Mammary epithelial cell (primary cell): ENCODE measurements at regions of chr16 and their contacts with region 1.

Region 1: DNA sequence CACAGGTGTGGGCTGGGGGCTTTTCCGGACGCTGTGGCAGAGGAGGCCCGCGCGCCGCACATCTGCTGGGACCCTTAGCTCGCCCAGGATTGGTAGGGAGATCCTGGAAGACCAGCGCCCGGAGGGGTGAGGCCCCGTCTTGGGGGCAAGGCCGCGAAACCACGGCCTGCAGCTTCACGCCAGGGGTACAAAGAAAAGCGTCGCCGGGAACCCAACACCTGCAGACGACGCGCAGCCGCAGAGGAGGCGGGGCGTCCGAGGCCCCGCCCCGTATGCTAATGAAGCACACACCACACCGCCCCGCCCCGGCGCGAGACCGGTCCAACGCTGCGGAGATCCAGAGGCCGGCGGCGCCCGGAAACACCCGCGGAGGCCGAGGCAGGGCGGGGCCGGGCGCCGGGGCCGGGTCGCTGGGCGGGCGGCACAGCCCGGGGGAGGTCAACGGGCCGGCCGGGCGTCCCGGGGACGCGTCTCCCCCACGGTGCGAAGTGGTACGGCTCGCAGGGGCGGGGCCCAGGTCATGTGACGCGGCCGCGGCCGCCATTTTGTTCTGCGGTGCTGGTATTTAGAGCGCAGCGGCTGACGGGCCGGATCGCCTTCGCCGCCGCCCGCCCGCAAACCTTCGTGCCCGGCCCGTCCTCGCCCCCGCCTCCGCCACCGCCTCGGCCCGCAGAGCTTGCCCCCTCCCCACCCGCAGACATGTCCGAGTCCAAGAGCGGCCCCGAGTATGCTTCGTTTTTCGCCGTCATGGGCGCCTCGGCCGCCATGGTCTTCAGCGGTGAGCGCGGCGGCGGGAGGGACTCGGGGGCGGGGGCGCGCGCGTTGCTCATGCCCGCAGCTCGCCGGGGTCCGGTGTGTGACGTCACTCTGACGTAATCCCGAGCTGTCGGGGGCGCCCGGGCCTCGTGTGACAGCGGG is at the start of gene ATP6V0C:
- DNase-seq: peak; percentile 89
- H3K4me3 ChIP-seq: peak within 1 kb of the TSS; percentile 70 to 91 (median 71)
- H3K27ac ChIP-seq: peak within 1 kb of the TSS; percentile 67
- H3K4me1 ChIP-seq: peaks cover 37% of the 10 kb centered on the region
- H3K27me3 ChIP-seq: no peaks in the 10 kb centered on the region
- CTCF ChIP-seq: no peak
- total RNA-seq, gene ATP6V0C: 41.5 to 250 TPM

Region 2: GRCh38 chr16:2531767-2532493 is 18.3 kb after region 1 on chr16:
- CTCF ChIA-PET with region 1: no interaction called
- dilution Hi-C with region 1: no loop called
- in situ Hi-C with region 1: no loop called
- intact Hi-C with region 1: loop called (anchors 2 kb)
- DNase-seq: peak; percentile 98
- H3K4me3 ChIP-seq: peak overlapping the region; percentile 46 to 73 (median 65)
- H3K27ac ChIP-seq: peak overlapping the region; percentile 43
- H3K4me1 ChIP-seq: peaks cover 21% of the 10 kb centered on the region
- H3K27me3 ChIP-seq: no peaks in the 10 kb centered on the region
- CTCF ChIP-seq: no peak

Region 3: DNA sequence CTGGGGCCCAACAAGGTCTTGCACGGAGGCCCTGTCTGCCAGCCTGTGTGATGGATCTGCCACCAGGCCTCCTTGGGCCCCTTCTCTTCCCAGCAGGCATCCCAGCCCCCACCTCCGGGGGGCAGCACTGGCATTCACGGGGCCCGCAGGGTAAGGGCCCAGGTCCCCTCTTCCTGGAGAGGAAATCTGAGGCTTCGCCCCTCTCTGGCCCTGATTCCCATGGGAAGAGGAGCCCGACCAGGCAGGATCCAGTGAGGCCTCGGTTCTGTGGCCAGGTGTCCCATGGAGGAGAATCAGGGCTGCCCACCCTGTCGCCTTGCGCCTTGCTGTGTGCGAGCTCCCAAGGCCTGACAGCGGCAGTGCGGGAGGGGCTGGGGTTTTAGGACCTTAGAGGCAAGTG is 72.6 kb after region 1 on chr16:
- CTCF ChIA-PET with region 1: no interaction called
- dilution Hi-C with region 1: no loop called
- in situ Hi-C with region 1: no loop called
- intact Hi-C with region 1: no loop called
- DNase-seq: no peak
- H3K4me3 ChIP-seq: no peak overlapping the region
- H3K27ac ChIP-seq: no peak overlapping the region
- H3K4me1 ChIP-seq: no peaks in the 10 kb centered on the region
- H3K27me3 ChIP-seq: no peaks in the 10 kb centered on the region
- CTCF ChIP-seq: no peak

Region 4: DNA sequence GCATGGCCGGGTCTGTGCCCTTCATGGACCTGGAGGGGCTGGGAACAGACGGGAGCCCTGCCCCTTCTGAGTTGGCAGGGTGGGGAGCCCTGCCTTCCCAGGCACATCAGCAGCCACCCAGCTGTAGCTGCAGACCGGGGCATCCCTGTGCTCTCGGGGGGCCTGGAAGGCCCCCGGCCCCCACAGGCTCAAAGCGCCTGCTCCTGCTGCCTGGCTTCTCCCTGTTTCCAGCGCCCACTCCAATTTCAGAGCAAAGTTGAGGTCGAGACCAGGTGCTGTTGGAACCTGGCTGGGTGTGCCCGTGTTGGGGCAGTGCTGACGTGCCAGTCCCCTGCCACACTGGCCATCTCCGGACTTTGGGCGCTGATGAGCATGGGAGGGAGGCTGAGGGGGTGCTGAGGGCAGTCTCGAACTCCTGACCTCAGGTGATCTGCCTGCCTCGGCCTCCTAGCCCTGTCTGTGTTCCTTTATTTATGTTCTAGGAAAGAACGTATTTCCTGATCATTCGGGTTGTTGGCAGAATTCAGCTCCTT is 211.2 kb after region 1 on chr16:
- CTCF ChIA-PET with region 1: no interaction called
- dilution Hi-C with region 1: no loop called
- in situ Hi-C with region 1: no loop called
- intact Hi-C with region 1: no loop called
- DNase-seq: no peak
- H3K4me3 ChIP-seq: no peak overlapping the region
- H3K27ac ChIP-seq: no peak overlapping the region
- H3K4me1 ChIP-seq: peaks cover 5% of the 10 kb centered on the region
- H3K27me3 ChIP-seq: no peaks in the 10 kb centered on the region
- CTCF ChIP-seq: no peak